ENCODE measurements at regions of chr13 and their contacts with region 1.

Region 1: GRCh38 chr13:30114571-30115256 is 192.6 kb downstream of the KATNAL1 start:
- DNase-seq: peak; percentile 90 to 97 (median 94)
- ATAC-seq: peak; percentile 92
- H3K4me3 ChIP-seq: peak overlapping the region; percentile 45 to 61
- H3K4me3 Mint-ChIP-seq: peak overlapping the region; percentile 85
- H3K27ac ChIP-seq: no peak overlapping the region
- H3K27ac Mint-ChIP-seq: peak overlapping the region; percentile 92
- H3K4me1 ChIP-seq: peaks cover 15% of the 10 kb centered on the region
- H3K4me1 Mint-ChIP-seq: peaks cover 30% of the 10 kb centered on the region
- H3K27me3 ChIP-seq: no peaks in the 10 kb centered on the region
- H3K27me3 Mint-ChIP-seq: no peaks in the 10 kb centered on the region
- CTCF ChIP-seq: peak; percentile 91

Region 2: GRCh38 chr13:29508130-29508875 is 606.4 kb before region 1 on chr13:
- CTCF ChIA-PET with region 1: interaction called, 83 read pairs
- POLR2A ChIA-PET with region 1: interaction called, 5 read pairs
- intact Hi-C with region 1: loop called (anchors 1 kb)
- DNase-seq: peak; percentile 54 to 87 (median 77)
- ATAC-seq: peak; percentile 65
- H3K4me3 ChIP-seq: no peak overlapping the region
- H3K4me3 Mint-ChIP-seq: no peak overlapping the region
- H3K27ac ChIP-seq: no peak overlapping the region
- H3K27ac Mint-ChIP-seq: no peak overlapping the region
- H3K4me1 ChIP-seq: no peaks in the 10 kb centered on the region
- H3K4me1 Mint-ChIP-seq: no peaks in the 10 kb centered on the region
- H3K27me3 ChIP-seq: no peaks in the 10 kb centered on the region
- H3K27me3 Mint-ChIP-seq: peaks cover 6% of the 10 kb centered on the region
- CTCF ChIP-seq: peak; percentile 83

Region 3: DNA sequence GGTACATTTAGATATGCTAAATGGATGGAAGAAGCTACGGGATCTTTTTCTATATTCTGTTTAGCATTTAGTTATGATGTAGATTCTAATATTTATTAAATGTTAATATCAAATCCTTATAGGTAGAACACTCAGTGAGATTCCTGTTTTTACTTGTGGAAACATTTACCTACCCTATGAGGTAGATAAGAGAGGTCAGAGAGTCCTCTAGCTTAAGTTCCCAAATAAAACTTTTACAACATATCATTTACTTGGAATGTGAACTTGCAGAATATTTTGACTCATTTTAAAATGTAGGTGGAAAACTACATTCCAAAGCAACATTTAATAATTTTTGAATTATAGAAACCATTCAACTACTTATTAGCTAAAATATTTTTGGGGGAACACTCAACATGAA is 328.0 kb before region 1 on chr13:
- CTCF ChIA-PET with region 1: interaction called, 13 read pairs
- POLR2A ChIA-PET with region 1: interaction called, 3 read pairs
- intact Hi-C with region 1: no loop called
- DNase-seq: no peak
- ATAC-seq: no peak
- H3K4me3 ChIP-seq: no peak overlapping the region
- H3K4me3 Mint-ChIP-seq: no peak overlapping the region
- H3K27ac ChIP-seq: no peak overlapping the region
- H3K27ac Mint-ChIP-seq: no peak overlapping the region
- H3K4me1 ChIP-seq: peaks cover 6% of the 10 kb centered on the region
- H3K4me1 Mint-ChIP-seq: peaks cover 49% of the 10 kb centered on the region
- H3K27me3 ChIP-seq: no peaks in the 10 kb centered on the region
- H3K27me3 Mint-ChIP-seq: no peaks in the 10 kb centered on the region
- CTCF ChIP-seq: no peak

Region 4: GRCh38 chr13:29946093-29946492 is 168.6 kb before region 1 on chr13:
- CTCF ChIA-PET with region 1: interaction called, 132 read pairs
- POLR2A ChIA-PET with region 1: no interaction called
- intact Hi-C with region 1: no loop called
- DNase-seq: peak in 1 of 9 experiments; percentile 5
- ATAC-seq: no peak
- H3K4me3 ChIP-seq: no peak overlapping the region
- H3K4me3 Mint-ChIP-seq: no peak overlapping the region
- H3K27ac ChIP-seq: no peak overlapping the region
- H3K27ac Mint-ChIP-seq: no peak overlapping the region
- H3K4me1 ChIP-seq: no peaks in the 10 kb centered on the region
- H3K4me1 Mint-ChIP-seq: peaks cover 5% of the 10 kb centered on the region
- H3K27me3 ChIP-seq: no peaks in the 10 kb centered on the region
- H3K27me3 Mint-ChIP-seq: peaks cover 2% of the 10 kb centered on the region
- CTCF ChIP-seq: no peak

Region 5: DNA sequence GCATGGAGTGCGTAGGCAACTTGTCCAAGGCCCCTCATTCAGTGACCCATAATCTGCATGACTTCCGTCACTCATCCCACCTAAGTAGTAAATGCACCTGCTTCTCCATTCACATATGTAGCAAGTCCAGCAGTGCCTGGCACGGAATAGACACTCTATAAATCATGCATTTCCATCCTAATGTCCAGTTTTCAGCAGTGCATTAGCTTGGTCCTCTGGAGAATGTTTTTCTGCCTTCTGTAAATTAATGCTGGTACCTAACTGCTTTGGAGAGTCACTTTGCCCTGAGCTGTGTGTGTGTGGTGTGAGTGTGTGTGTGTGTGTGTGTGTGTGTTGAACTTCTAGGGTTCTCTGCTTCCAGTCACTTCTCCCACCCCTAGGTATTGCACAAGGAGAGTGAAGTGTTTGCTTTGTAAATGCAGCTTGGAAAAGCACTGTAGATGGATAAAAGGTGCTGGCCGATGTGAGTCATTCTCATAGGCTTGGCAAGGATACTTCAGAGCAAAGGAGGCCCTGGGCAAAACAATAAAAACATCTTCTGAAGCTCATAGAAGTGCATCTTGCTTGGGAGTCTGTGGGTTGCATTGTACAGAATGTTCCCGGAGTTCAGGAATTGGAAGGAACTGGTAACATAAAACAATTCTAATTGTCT is 10.8 kb after region 1 on chr13:
- CTCF ChIA-PET with region 1: interaction called, 61 read pairs
- POLR2A ChIA-PET with region 1: no interaction called
- intact Hi-C with region 1: no loop called
- DNase-seq: no peak
- ATAC-seq: no peak
- H3K4me3 ChIP-seq: no peak overlapping the region
- H3K4me3 Mint-ChIP-seq: no peak overlapping the region
- H3K27ac ChIP-seq: no peak overlapping the region
- H3K27ac Mint-ChIP-seq: no peak overlapping the region
- H3K4me1 ChIP-seq: peaks cover 12% of the 10 kb centered on the region
- H3K4me1 Mint-ChIP-seq: peaks cover 26% of the 10 kb centered on the region
- H3K27me3 ChIP-seq: no peaks in the 10 kb centered on the region
- H3K27me3 Mint-ChIP-seq: no peaks in the 10 kb centered on the region
- CTCF ChIP-seq: no peak

Region 6: GRCh38 chr13:30158774-30159445 is 44.2 kb after region 1 on chr13:
- CTCF ChIA-PET with region 1: interaction called, 630 read pairs
- POLR2A ChIA-PET with region 1: interaction called, 5 read pairs
- intact Hi-C with region 1: no loop called
- DNase-seq: peak in 2 of 9 experiments; percentile 63 to 74
- ATAC-seq: peak; percentile 59
- H3K4me3 ChIP-seq: no peak overlapping the region
- H3K4me3 Mint-ChIP-seq: no peak overlapping the region
- H3K27ac ChIP-seq: peak overlapping the region in 1 of 2 experiments; percentile 18
- H3K27ac Mint-ChIP-seq: peak overlapping the region; percentile 68
- H3K4me1 ChIP-seq: peaks cover 13% of the 10 kb centered on the region
- H3K4me1 Mint-ChIP-seq: peaks cover 30% of the 10 kb centered on the region
- H3K27me3 ChIP-seq: no peaks in the 10 kb centered on the region
- H3K27me3 Mint-ChIP-seq: no peaks in the 10 kb centered on the region
- CTCF ChIP-seq: peak; percentile 32